CD4-positive, alpha-beta memory T cell (primary cell): ENCODE measurements at regions of chr4 and their contacts with region 1.

Region 1: GRCh38 chr4:781493-782216 is 44.3 kb downstream of the CPLX1 start:
- DNase-seq: peak; percentile 99
- H3K4me3 ChIP-seq: peak overlapping the region; percentile 76
- H3K4me3 Mint-ChIP-seq: peak overlapping the region; percentile 88 to 93 (median 93)
- H3K27ac ChIP-seq: peak overlapping the region; percentile 94
- H3K27ac Mint-ChIP-seq: peak overlapping the region; percentile 91 to 98 (median 95)
- H3K4me1 ChIP-seq: peaks cover 66% of the 10 kb centered on the region
- H3K4me1 Mint-ChIP-seq: peaks cover 20 to 64% (median 44%) of the 10 kb centered on the region in 4 donors
- H3K27me3 ChIP-seq: peaks cover 5% of the 10 kb centered on the region
- H3K27me3 Mint-ChIP-seq: peaks cover 2 to 10% of the 10 kb centered on the region in 2 donors

Region 2: GRCh38 chr4:793941-794621 is 12.4 kb after region 1 on chr4:
- CTCF ChIA-PET with region 1: interaction called, 3 read pairs
- POLR2A ChIA-PET with region 1: interaction called, 22 read pairs
- intact Hi-C with region 1: no loop called
- DNase-seq: no peak
- H3K4me3 ChIP-seq: no peak overlapping the region
- H3K4me3 Mint-ChIP-seq: peak overlapping the region in 7 of 8 donors; percentile 22 to 74 (median 50)
- H3K27ac ChIP-seq: no peak overlapping the region
- H3K27ac Mint-ChIP-seq: peak overlapping the region in 1 of 7 donors; percentile 41
- H3K4me1 ChIP-seq: peaks cover 52% of the 10 kb centered on the region
- H3K4me1 Mint-ChIP-seq: peaks cover 9 to 50% (median 22%) of the 10 kb centered on the region in 4 donors
- H3K27me3 ChIP-seq: peaks cover 14% of the 10 kb centered on the region
- H3K27me3 Mint-ChIP-seq: peaks cover 14 to 27% of the 10 kb centered on the region in 2 donors

Region 3: GRCh38 chr4:876780-877179 is 95.1 kb after region 1 on chr4:
- CTCF ChIA-PET with region 1: no interaction called
- POLR2A ChIA-PET with region 1: interaction called, 10 read pairs
- intact Hi-C with region 1: loop called (anchors 5 kb)
- DNase-seq: no peak
- H3K4me3 ChIP-seq: no peak overlapping the region
- H3K4me3 Mint-ChIP-seq: peak overlapping the region in 1 of 8 donors; percentile 21
- H3K27ac ChIP-seq: no peak overlapping the region
- H3K27ac Mint-ChIP-seq: peak overlapping the region in 3 of 7 donors; percentile 21 to 81 (median 59)
- H3K4me1 ChIP-seq: peaks cover 26% of the 10 kb centered on the region
- H3K4me1 Mint-ChIP-seq: peaks cover 24 to 36% (median 28%) of the 10 kb centered on the region in 4 donors
- H3K27me3 ChIP-seq: no peaks in the 10 kb centered on the region
- H3K27me3 Mint-ChIP-seq: no peaks in the 10 kb centered on the region

Region 4: GRCh38 chr4:973431-974397 is 192.1 kb after region 1 on chr4 and contains the start of gene DGKQ:
- CTCF ChIA-PET with region 1: no interaction called
- POLR2A ChIA-PET with region 1: no interaction called
- intact Hi-C with region 1: loop called (anchors 1 kb)
- DNase-seq: peak; percentile 78 to 88 (median 83)
- H3K4me3 ChIP-seq: peak within 1 kb of the TSS; percentile 36 to 57
- H3K4me3 Mint-ChIP-seq: peak within 1 kb of the TSS; percentile 34 to 76 (median 52)
- H3K27ac ChIP-seq: peak within 1 kb of the TSS; percentile 51
- H3K27ac Mint-ChIP-seq: peak within 1 kb of the TSS in 1 of 7 donors; percentile 60
- H3K4me1 ChIP-seq: peaks cover 24% of the 10 kb centered on the region
- H3K4me1 Mint-ChIP-seq: peaks cover 0 to 13% (median 3%) of the 10 kb centered on the region in 4 donors
- H3K27me3 ChIP-seq: no peaks in the 10 kb centered on the region
- H3K27me3 Mint-ChIP-seq: no peaks in the 10 kb centered on the region
- total RNA-seq, gene DGKQ: 25.9 to 29.6 TPM

Region 5: GRCh38 chr4:1683736-1684505 is 902.3 kb after region 1 on chr4 and contains the start of gene FAM53A:
- CTCF ChIA-PET with region 1: no interaction called
- POLR2A ChIA-PET with region 1: no interaction called
- intact Hi-C with region 1: loop called (anchors 5 kb)
- DNase-seq: peak; percentile 57 to 92 (median 90)
- H3K4me3 ChIP-seq: peak within 1 kb of the TSS; percentile 52 to 58
- H3K4me3 Mint-ChIP-seq: peak within 1 kb of the TSS; percentile 88 to 93 (median 91)
- H3K27ac ChIP-seq: peak within 1 kb of the TSS; percentile 52
- H3K27ac Mint-ChIP-seq: peak within 1 kb of the TSS; percentile 89 to 96 (median 95)
- H3K4me1 ChIP-seq: peaks cover 7% of the 10 kb centered on the region
- H3K4me1 Mint-ChIP-seq: peaks cover 9 to 16% (median 11%) of the 10 kb centered on the region in 4 donors
- H3K27me3 ChIP-seq: no peaks in the 10 kb centered on the region
- H3K27me3 Mint-ChIP-seq: no peaks in the 10 kb centered on the region
- total RNA-seq, gene FAM53A: 0.89 to 2.2 TPM

Region 6: DNA sequence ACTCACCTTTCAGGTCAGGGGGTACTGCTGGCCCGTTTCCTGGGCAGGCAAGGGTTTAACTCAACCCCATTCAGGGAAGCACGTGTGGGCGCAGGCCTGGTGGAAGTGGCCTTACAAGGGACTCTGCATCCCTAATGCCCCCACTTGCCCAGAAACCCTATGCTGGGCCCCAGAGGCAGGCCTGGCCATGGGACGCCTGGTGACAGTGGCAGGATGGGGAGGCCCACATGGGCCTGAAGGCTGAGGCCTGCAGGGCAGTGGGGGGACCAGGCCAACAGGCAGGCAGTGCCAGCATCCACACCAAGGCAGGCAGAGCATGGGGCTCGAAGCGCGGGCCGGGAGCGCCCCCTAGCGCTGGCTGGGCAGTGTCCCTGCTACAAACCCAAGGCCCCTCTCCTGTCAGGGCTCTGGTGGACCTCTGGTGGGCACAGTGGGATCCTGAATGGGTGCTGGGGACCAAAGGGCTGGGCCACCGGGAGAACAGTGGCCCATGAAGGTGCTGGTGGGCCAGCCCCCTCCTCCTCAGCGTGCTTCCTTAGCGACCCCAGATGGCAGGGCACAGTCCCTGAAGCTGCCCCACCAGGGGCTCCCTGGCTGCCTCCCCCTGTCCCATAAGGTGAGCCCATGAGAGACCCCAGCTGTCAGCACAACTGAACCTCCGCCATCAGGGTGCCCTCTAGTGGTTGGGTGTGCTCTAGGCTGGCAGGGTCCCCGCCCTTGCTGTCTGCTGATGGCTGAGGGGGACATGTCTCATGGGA is 1028.3 kb after region 1 on chr4:
- CTCF ChIA-PET with region 1: no interaction called
- POLR2A ChIA-PET with region 1: no interaction called
- intact Hi-C with region 1: no loop called
- DNase-seq: peak; percentile 57 to 65 (median 60)
- H3K4me3 ChIP-seq: no peak overlapping the region
- H3K4me3 Mint-ChIP-seq: no peak overlapping the region
- H3K27ac ChIP-seq: no peak overlapping the region
- H3K27ac Mint-ChIP-seq: no peak overlapping the region
- H3K4me1 ChIP-seq: no peaks in the 10 kb centered on the region
- H3K4me1 Mint-ChIP-seq: peaks cover 0 to 1% (median 0%) of the 10 kb centered on the region in 4 donors
- H3K27me3 ChIP-seq: no peaks in the 10 kb centered on the region
- H3K27me3 Mint-ChIP-seq: no peaks in the 10 kb centered on the region